Left ventricle myocardium superior (tissue), 1 donor: ENCODE measurements at regions of chr6 and their contacts with region 1.

Region 1: GRCh38 chr6:44627091-44627878 is 239.8 kb downstream of the CDC5L start:
- DNase-seq: peak; percentile 46
- ATAC-seq: peak; percentile 66

Region 2: GRCh38 chr6:43883847-43884651 is 743.2 kb before region 1 on chr6:
- intact Hi-C with region 1: loop called (anchors 10 kb)
- DNase-seq: no peak
- ATAC-seq: peak; percentile 28

Region 3: GRCh38 chr6:44976719-44977641 is 349.7 kb after region 1 on chr6:
- intact Hi-C with region 1: no loop called
- DNase-seq: no peak
- ATAC-seq: no peak